ENCODE measurements at regions of chr11 and their contacts with region 1.

Region 1: DNA sequence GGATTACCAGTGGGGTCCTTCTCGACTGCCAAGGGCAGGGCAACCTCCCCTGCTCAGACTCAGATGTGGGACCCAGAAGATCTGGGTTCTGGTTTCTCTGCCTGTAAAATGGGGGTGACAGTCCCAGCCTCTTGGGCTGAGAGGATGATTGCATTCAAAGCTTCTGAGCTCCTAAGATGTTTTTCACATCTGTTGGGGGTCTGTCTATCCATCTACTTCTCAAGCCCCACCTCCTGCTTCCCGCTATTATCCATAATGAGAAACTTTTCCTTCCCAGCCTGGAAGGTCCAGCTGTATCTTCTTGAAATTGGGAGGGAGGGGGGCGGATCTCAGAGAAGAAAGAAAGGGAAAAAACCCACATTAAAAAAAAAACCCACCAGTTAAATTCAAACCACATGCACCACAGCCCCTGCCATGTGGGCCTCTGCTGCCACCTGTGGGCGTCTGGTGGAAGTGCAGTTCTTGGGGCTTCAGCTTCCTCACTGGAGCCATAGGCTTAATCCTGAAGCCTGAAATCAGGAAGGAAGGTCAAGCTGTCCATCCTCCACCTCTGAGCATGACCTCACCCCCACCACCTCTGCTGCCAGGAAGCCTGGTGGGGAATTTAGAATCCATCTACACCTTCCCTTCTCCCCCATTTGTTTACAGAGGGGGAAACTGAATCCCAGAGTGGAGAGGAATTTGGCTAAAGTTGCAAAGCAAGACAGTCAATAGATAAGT is 27.3 kb downstream of the ARHGEF17 start:
- DNase-seq: no peak
- H3K4me3 ChIP-seq: no peak overlapping the region
- H3K27me3 ChIP-seq: no peaks in the 10 kb centered on the region
- CTCF ChIP-seq: peak; percentile 98

Region 2: GRCh38 chr11:73295231-73295995 is 40.0 kb before region 1 on chr11:
- CTCF ChIA-PET with region 1: interaction called, 114 read pairs
- POLR2A ChIA-PET with region 1: interaction called, 9 read pairs
- DNase-seq: peak; percentile 70
- H3K4me3 ChIP-seq: no peak overlapping the region
- H3K27me3 ChIP-seq: no peaks in the 10 kb centered on the region
- CTCF ChIP-seq: peak; percentile 98

Region 3: GRCh38 chr11:73314117-73314961 is 21.0 kb before region 1 on chr11:
- CTCF ChIA-PET with region 1: interaction called, 259 read pairs
- POLR2A ChIA-PET with region 1: interaction called, 19 read pairs
- DNase-seq: no peak
- H3K4me3 ChIP-seq: peak overlapping the region; percentile 80
- H3K27me3 ChIP-seq: no peaks in the 10 kb centered on the region
- CTCF ChIP-seq: peak; percentile 23; the same call in 1 of the 2 replicates

Region 4: GRCh38 chr11:73325036-73325981 is 10.1 kb before region 1 on chr11:
- CTCF ChIA-PET with region 1: interaction called, 75 read pairs
- POLR2A ChIA-PET with region 1: no interaction called
- DNase-seq: no peak
- H3K4me3 ChIP-seq: no peak overlapping the region
- H3K27me3 ChIP-seq: no peaks in the 10 kb centered on the region
- CTCF ChIP-seq: no peak

Measured in BJ (cell line).